Activated CD8-positive, alpha-beta T cell treated with anti-CD3 and anti-CD28 coated beads for 36 hours (primary cell): ENCODE measurements at regions of chr1 and their contacts with region 1.

Region 1: DNA sequence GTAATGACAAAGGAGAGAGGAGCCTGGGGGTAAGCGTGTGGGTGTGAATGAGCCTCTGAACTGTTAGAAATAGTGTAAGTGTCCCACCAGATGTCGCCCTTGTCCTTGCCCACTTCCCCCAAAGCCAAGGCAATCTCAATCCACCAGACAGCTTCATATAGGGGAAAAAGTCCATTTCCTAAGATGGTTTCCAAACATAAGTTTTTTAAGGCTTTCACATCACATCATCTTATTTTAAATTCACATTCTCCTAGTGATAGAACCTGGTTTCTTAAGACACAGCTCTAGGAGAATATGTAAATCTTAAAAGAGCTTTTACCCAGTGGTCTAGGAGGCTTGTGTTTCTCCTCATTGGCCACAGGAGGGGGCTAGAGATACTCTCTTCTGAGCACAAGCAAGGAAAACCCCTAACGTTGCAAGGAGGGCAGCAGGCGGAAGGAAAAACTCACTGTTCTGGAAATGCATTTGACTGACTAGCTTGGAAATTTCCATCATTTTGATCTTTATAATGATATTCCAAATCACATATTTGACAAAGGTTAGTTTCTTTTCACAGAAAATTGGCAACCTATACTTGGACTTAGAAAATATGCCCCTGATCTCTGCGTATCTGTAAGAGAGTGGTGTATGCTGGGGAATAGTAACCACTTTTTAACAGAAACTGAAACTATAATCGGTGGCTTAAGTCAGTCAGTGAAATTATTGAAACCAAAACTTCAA is 51.9 kb upstream of the LPAR3 start:
- DNase-seq: peak; percentile 84
- ATAC-seq: peak; percentile 94
- H3K4me3 Mint-ChIP-seq: peak overlapping the region; percentile 76
- H3K27ac Mint-ChIP-seq: peak overlapping the region; percentile 95
- H3K4me1 Mint-ChIP-seq: peaks cover 16% of the 10 kb centered on the region
- H3K27me3 Mint-ChIP-seq: no peaks in the 10 kb centered on the region
- CTCF ChIP-seq: peak; percentile 95

Region 2: DNA sequence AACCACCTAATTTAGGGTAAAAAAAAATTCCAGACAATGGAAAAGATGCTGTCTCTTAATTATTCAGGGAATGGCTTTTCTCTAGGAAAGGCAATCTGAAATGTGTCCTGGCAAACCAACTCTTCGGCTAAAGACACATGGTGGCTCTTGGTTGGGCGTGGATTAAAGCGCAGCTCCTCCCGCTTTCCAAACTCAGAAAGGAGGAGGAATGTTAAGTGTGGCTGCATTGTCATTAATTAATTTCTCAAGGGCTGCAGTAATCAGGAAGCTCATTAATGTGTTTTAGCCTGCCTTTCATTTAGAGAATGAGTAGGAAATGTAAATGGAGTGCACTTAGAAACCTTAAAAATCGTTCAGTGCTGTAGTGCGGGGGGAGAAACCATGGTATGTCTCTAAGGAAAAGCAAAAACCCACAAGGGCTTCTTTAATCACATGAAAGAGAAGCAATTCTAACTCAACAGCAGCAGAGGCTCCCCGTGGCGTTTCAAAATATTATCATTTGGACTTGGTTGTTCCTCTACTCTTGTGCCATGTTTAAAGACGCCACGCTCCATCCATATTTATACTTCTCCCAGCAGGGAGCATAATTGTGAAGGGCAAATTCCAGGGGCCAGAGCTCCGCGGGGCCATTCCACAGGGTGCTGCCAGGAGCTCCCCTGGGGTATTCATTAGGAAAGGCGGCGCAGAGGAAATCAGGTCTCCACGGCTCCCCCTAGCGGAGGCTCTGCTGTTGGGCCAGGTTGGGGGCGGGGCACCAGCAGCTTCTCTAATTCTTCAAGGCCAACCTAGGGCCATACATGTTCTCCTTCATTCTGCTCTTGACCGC is 162.8 kb before region 1 on chr1:
- CTCF ChIA-PET with region 1: interaction called, 10 read pairs
- POLR2A ChIA-PET with region 1: no interaction called
- intact Hi-C with region 1: no loop called
- DNase-seq: peak; percentile 88
- ATAC-seq: peak; percentile 90
- H3K4me3 Mint-ChIP-seq: peak overlapping the region; percentile 63
- H3K27ac Mint-ChIP-seq: no peak overlapping the region
- H3K4me1 Mint-ChIP-seq: peaks cover 27% of the 10 kb centered on the region
- H3K27me3 Mint-ChIP-seq: peaks cover 4% of the 10 kb centered on the region
- CTCF ChIP-seq: peak; percentile 88

Region 3: GRCh38 chr1:84916897-84917296 is 28.0 kb before region 1 on chr1:
- CTCF ChIA-PET with region 1: no interaction called
- POLR2A ChIA-PET with region 1: no interaction called
- intact Hi-C with region 1: no loop called
- DNase-seq: no peak
- ATAC-seq: no peak
- H3K4me3 Mint-ChIP-seq: no peak overlapping the region
- H3K27ac Mint-ChIP-seq: no peak overlapping the region
- H3K4me1 Mint-ChIP-seq: no peaks in the 10 kb centered on the region
- H3K27me3 Mint-ChIP-seq: peaks cover 3% of the 10 kb centered on the region
- CTCF ChIP-seq: no peak

Region 4: DNA sequence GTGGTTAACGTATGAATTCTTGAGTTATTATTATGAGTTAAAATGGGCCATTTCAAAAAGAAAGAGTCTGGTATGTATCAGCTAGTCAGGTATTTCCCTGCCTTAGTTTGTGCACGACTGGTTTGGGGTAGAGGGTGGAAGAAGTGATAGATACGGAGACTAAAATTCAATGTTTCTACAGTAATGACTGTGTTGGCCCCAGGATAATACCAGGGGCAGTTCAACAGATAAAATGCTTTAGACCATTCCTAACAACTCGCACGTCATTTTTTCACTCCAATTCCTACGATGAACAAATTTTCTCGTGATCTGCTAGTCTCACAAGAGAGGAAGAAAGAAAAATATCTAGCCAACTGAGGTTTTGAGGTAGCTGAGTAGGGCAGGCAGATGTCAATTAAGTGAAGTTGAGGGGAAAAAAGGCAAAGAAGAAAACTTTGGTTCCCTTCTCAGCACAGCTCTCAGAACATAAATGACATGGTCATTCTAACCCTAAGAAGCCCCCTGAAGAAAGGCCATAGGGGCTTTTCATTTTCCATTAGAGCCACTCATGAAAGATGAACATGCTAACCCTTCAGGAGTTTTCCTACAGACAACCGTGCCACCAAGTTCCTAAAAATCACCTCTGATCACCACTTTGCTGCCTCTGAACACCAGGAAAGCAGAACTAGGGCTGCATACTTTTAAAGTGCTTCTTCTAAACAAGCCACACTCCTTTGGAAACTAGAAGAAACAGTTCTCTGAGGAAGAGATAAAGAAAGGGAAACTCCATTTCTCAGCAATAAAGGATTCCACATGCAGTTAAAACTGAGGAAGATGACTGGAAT is 46.4 kb after region 1 on chr1:
- CTCF ChIA-PET with region 1: interaction called, 37 read pairs
- POLR2A ChIA-PET with region 1: interaction called, 5 read pairs
- intact Hi-C with region 1: loop called (anchors 2 kb)
- DNase-seq: no peak
- ATAC-seq: peak; percentile 43
- H3K4me3 Mint-ChIP-seq: peak overlapping the region; percentile 23
- H3K27ac Mint-ChIP-seq: peak overlapping the region; percentile 62
- H3K4me1 Mint-ChIP-seq: peaks cover 42% of the 10 kb centered on the region
- H3K27me3 Mint-ChIP-seq: no peaks in the 10 kb centered on the region
- CTCF ChIP-seq: no peak

Region 5: GRCh38 chr1:85027242-85027983 is 82.5 kb after region 1 on chr1:
- CTCF ChIA-PET with region 1: interaction called, 133 read pairs
- POLR2A ChIA-PET with region 1: interaction called, 7 read pairs
- intact Hi-C with region 1: loop called (anchors 1 kb)
- DNase-seq: peak; percentile 42
- ATAC-seq: peak; percentile 89
- H3K4me3 Mint-ChIP-seq: no peak overlapping the region
- H3K27ac Mint-ChIP-seq: peak overlapping the region; percentile 80
- H3K4me1 Mint-ChIP-seq: peaks cover 13% of the 10 kb centered on the region
- H3K27me3 Mint-ChIP-seq: peaks cover 1% of the 10 kb centered on the region
- CTCF ChIP-seq: peak; percentile 26

Region 6: GRCh38 chr1:85048296-85049064 is 103.6 kb after region 1 on chr1 and contains the start of gene MCOLN3:
- CTCF ChIA-PET with region 1: interaction called, 16 read pairs
- POLR2A ChIA-PET with region 1: no interaction called
- intact Hi-C with region 1: no loop called
- DNase-seq: peak; percentile 54
- ATAC-seq: peak; percentile 72
- H3K4me3 Mint-ChIP-seq: peak within 1 kb of the TSS; percentile 69
- H3K27ac Mint-ChIP-seq: no peak within 1 kb of the TSS
- H3K4me1 Mint-ChIP-seq: peaks cover 20% of the 10 kb centered on the region
- H3K27me3 Mint-ChIP-seq: peaks cover 45% of the 10 kb centered on the region
- CTCF ChIP-seq: no peak
- total RNA-seq, gene MCOLN3: 0.25 to 0.29 TPM

Region 7: GRCh38 chr1:85109475-85109874 is 164.5 kb after region 1 on chr1:
- CTCF ChIA-PET with region 1: interaction called, 20 read pairs
- POLR2A ChIA-PET with region 1: no interaction called
- intact Hi-C with region 1: no loop called
- DNase-seq: peak; percentile 56
- ATAC-seq: peak; percentile 87
- H3K4me3 Mint-ChIP-seq: no peak overlapping the region
- H3K27ac Mint-ChIP-seq: no peak overlapping the region
- H3K4me1 Mint-ChIP-seq: no peaks in the 10 kb centered on the region
- H3K27me3 Mint-ChIP-seq: peaks cover 4% of the 10 kb centered on the region
- CTCF ChIP-seq: peak; percentile 72

Region 8: GRCh38 chr1:85259118-85259911 is 314.4 kb after region 1 on chr1 and contains the start of gene C1orf52:
- CTCF ChIA-PET with region 1: interaction called, 167 read pairs
- POLR2A ChIA-PET with region 1: interaction called, 4 read pairs
- intact Hi-C with region 1: loop called (anchors 1 kb)
- DNase-seq: peak; percentile 98
- ATAC-seq: peak; percentile 99
- H3K4me3 Mint-ChIP-seq: peak within 1 kb of the TSS; percentile 87
- H3K27ac Mint-ChIP-seq: peak within 1 kb of the TSS; percentile 96
- H3K4me1 Mint-ChIP-seq: peaks cover 36% of the 10 kb centered on the region
- H3K27me3 Mint-ChIP-seq: no peaks in the 10 kb centered on the region
- CTCF ChIP-seq: peak; percentile 93
- total RNA-seq, gene C1orf52: 26.8 to 35.7 TPM